Activated T-helper 1 cell treated with anti-CD3 and anti-CD28 coated beads, Interleukin-12 subunit alpha, Interleukin-12 subunit beta, Interleukin-2, Interleukin-4 antibody, amounts not matched to agents 30 ng/mL and 10 ng/mL and 1 ng/mL, durations not matched to agents 14 hours and 24 hours and 36 hours (primary cell): ENCODE measurements at regions of chr2 and their contacts with region 1.

Region 1: GRCh38 chr2:239326831-239327535 is 73.8 kb downstream of the HDAC4 start:
- DNase-seq: peak; percentile 74
- H3K4me3 Mint-ChIP-seq: peak overlapping the region; percentile 61
- H3K27ac Mint-ChIP-seq: peak overlapping the region; percentile 94
- H3K4me1 Mint-ChIP-seq: peaks cover 83% of the 10 kb centered on the region
- H3K27me3 Mint-ChIP-seq: no peaks in the 10 kb centered on the region

Region 2: DNA sequence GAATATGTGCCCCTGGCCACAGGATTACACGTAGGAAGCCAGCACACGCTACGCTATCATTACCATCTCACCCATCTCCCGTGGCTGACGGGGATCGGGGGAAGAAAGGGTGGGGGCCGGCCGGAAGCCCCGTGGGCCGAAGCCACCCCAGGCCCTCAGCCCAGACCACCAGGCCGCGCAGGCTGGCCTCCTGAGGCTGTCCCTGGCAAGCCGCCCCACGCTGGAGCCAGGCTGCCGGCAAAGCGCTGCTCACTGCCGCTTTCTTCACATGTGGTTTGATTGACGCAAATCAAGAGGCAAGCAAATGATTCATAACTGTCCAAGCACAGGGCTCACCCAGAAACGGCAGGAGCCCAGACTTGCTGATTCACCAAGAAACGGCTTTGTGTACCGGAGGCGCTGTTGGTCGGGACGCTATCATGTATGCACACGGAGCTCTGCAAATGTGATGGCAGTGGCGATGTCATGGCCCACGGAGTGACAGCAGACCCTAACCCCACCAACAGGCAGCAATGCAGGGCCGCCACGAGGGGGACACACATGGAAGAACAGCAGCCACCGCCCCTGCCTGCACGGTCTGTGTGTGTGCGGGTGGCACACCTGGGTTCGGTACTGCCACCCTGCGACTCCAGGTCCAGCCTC is 51.8 kb before region 1 on chr2:
- intact Hi-C with region 1: loop called (anchors 2 kb)
- DNase-seq: peak; percentile 81
- H3K4me3 Mint-ChIP-seq: peak overlapping the region; percentile 63
- H3K27ac Mint-ChIP-seq: peak overlapping the region; percentile 83
- H3K4me1 Mint-ChIP-seq: peaks cover 70% of the 10 kb centered on the region
- H3K27me3 Mint-ChIP-seq: peaks cover 8% of the 10 kb centered on the region

Region 3: DNA sequence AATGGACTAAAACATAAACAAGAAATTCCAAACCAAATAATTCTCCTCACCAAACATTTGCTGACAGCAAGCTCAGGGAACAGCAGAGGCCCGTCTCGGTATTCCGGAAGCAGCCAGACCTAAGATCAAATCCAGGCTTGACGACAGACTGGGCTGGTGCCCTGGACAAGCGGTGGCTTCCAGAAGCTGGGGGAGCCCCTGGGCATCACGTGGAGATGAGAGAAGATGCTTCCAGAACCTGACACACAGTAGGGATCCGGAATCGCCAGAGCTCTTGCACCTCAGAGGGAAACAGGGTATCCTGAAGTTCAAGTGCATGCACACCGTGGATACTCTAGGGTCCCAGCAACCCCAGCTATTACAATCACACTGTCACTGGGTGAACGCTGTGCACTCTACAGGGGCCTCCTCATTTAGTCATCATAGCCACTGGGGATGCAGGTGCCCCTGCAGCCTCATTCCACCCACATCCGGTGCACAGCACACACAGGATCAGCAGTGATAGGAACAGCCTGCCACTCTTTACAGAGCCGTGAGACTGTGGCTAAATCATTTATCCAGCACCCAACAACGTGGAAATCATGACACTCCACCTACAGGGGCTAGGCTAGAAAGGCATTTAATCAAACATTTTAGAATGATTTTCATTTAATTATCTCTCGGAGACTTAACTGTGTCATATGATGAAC is 28.7 kb before region 1 on chr2:
- intact Hi-C with region 1: loop called (anchors 1 kb)
- DNase-seq: peak; percentile 72
- H3K4me3 Mint-ChIP-seq: peak overlapping the region; percentile 84
- H3K27ac Mint-ChIP-seq: peak overlapping the region; percentile 91
- H3K4me1 Mint-ChIP-seq: peaks cover 71% of the 10 kb centered on the region
- H3K27me3 Mint-ChIP-seq: peaks cover 2% of the 10 kb centered on the region

Region 4: GRCh38 chr2:239369631-239370161 is 42.7 kb after region 1 on chr2:
- intact Hi-C with region 1: loop called (anchors 1 kb)
- DNase-seq: peak; percentile 83
- H3K4me3 Mint-ChIP-seq: no peak overlapping the region
- H3K27ac Mint-ChIP-seq: peak overlapping the region; percentile 92
- H3K4me1 Mint-ChIP-seq: peaks cover 26% of the 10 kb centered on the region
- H3K27me3 Mint-ChIP-seq: no peaks in the 10 kb centered on the region

Region 5: GRCh38 chr2:239533569-239534316 is 206.8 kb after region 1 on chr2:
- intact Hi-C with region 1: no loop called
- DNase-seq: no peak
- H3K4me3 Mint-ChIP-seq: no peak overlapping the region
- H3K27ac Mint-ChIP-seq: no peak overlapping the region
- H3K4me1 Mint-ChIP-seq: no peaks in the 10 kb centered on the region
- H3K27me3 Mint-ChIP-seq: peaks cover 7% of the 10 kb centered on the region